Ascending aorta (tissue), 2 donors: ENCODE measurements at regions of chr3 and their contacts with region 1.

Region 1: DNA sequence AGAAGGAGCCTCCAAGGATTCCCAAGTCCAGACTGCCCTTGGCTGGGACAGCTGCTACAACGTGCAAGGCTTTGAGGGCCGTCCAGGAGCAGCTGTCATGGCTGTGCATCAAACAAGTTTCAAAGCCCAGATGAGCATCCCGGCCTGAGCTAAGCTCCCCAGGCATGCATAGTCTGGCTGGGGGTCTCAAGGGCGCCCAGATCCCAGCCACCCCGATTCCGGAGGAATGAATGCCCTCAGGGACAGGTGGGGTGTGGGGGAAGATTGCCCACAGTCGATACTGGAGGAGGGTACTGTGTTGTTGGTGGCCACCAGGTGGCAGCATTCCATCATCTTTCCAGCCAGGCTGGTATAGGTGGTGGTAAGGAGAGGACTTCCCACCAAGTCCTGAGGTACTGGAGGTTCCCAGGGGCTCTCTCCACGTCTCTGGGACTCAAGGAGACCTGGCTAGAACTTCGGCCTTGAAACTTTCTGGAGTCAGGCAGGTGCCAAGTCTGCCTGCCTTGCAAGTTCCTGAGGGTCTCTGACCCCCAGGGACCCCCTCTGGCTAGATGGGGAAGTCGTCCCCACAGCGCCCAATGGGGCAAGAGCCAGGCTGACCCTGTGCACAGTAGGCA is 32.8 kb downstream of the RBM5 start:
- DNase-seq: peak in 1 of 2 donors; percentile 82
- H3K4me3 ChIP-seq: no peak overlapping the region
- H3K27ac ChIP-seq: no peak overlapping the region
- H3K4me1 ChIP-seq: peaks cover 1 to 27% of the 10 kb centered on the region in 2 donors
- H3K27me3 ChIP-seq: no peaks in the 10 kb centered on the region
- CTCF ChIP-seq: peak; percentile 75 to 88 (median 79)

Region 2: DNA sequence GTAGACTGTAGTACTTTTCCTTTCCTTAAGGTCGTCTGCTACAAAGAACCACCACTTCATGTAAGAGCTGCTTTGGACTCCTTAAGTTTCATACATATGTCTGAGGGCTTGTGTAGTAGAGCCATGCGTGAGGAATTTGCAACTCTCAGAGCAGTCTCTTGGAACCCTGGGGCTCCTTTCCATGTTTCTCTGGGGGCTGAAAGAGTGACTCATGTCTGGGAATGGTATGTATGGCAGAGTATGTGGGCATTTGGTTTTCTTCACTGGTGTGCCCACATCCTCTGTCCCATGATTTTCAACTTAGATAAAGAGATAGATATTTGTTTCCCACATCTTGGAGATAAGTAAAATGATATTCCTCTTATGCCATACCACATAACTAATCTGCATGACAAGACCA is 53.4 kb before region 1 on chr3:
- intact Hi-C with region 1: no loop called
- DNase-seq: no peak
- H3K4me3 ChIP-seq: no peak overlapping the region
- H3K27ac ChIP-seq: no peak overlapping the region
- H3K4me1 ChIP-seq: no peaks in the 10 kb centered on the region
- H3K27me3 ChIP-seq: no peaks in the 10 kb centered on the region
- CTCF ChIP-seq: no peak

Region 3: DNA sequence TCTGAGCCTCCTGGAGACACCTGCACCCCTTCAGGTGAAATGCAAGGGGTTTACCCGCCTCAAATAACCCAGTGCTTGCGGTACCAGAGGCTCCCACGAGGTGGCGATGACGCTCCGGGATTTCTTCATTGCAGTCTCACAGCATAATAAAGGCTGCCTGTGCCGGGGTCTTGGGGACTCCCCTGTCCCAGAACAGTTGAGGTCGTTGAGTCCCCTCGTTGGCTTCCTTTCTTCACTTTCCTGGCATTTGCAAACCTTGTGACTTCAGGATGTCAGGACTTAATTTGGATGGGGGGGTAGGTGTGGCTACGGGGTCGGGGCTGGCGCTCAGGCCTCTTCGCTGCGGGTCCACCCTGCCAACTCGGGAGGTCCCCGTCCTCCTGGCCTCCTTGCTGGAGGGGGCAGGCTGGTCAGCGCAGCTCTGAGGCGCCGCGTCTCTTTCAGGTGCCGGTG is 71.2 kb after region 1 on chr3:
- intact Hi-C with region 1: loop called (anchors 1 kb)
- DNase-seq: peak in 1 of 2 donors; percentile 86
- H3K4me3 ChIP-seq: peak overlapping the region in 1 of 2 donors; percentile 39
- H3K27ac ChIP-seq: no peak overlapping the region
- H3K4me1 ChIP-seq: peaks cover 10 to 15% of the 10 kb centered on the region in 2 donors
- H3K27me3 ChIP-seq: peaks cover 18% of the 10 kb centered on the region
- CTCF ChIP-seq: peak; percentile 82 to 92 (median 91)

Region 4: GRCh38 chr3:50418850-50419249 is 297.3 kb after region 1 on chr3:
- intact Hi-C with region 1: no loop called
- DNase-seq: no peak
- H3K4me3 ChIP-seq: no peak overlapping the region
- H3K27ac ChIP-seq: no peak overlapping the region
- H3K4me1 ChIP-seq: no peaks in the 10 kb centered on the region
- H3K27me3 ChIP-seq: no peaks in the 10 kb centered on the region
- CTCF ChIP-seq: no peak